Activated CD8-positive, alpha-beta memory T cell treated with anti-CD3 and anti-CD28 coated beads, Interleukin-2, amount 10 ng/mL, durations not matched to agents 7 days and 5 days (primary cell): ENCODE measurements at regions of chr5 and their contacts with region 1.

Region 1: DNA sequence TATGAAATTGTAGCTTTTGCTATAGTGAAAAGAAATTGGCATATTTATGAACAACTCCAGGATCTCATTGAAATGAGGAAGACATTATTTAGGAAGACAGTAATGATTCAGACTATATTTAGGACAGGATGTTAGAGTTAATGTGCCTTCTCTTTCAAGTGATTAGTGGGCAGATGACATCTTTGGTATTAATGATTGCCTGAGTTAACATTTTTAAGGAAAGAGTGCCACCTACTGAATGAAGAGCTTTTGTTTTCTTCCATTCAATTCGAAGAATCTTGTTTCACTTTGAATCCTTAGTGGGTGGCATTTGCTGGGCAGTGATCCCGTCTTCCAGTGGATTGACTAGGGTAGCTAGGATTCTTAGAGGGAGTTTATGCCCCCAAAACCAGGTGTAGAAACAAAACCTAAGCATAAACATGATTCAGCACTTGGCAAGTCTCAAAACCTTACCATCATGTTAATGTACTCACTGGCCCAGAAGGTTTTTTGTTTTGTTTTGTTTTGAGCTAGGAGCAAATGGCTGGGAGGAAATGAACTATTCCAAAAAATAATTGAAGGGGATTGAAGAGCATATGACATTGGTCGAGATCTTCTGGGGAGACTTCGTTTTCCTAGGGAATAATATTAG is 23.2 kb downstream of the MAP3K1 start:
- DNase-seq: no peak
- ATAC-seq: peak; percentile 45
- H3K4me3 Mint-ChIP-seq: peak overlapping the region; percentile 49
- H3K27ac Mint-ChIP-seq: peak overlapping the region; percentile 44
- H3K4me1 Mint-ChIP-seq: peaks cover 18% of the 10 kb centered on the region
- H3K27me3 Mint-ChIP-seq: no peaks in the 10 kb centered on the region

Region 2: GRCh38 chr5:56270568-56271392 is 567.7 kb before region 1 on chr5:
- CTCF ChIA-PET with region 1: interaction called, 50 read pairs
- DNase-seq: peak; percentile 79
- ATAC-seq: peak; percentile 99
- H3K4me3 Mint-ChIP-seq: no peak overlapping the region
- H3K27ac Mint-ChIP-seq: no peak overlapping the region
- H3K4me1 Mint-ChIP-seq: peaks cover 16% of the 10 kb centered on the region
- H3K27me3 Mint-ChIP-seq: peaks cover 19% of the 10 kb centered on the region

Region 3: GRCh38 chr5:56827049-56827448 is 11.5 kb before region 1 on chr5:
- CTCF ChIA-PET with region 1: interaction called, 12 read pairs
- DNase-seq: no peak
- ATAC-seq: peak; percentile 33
- H3K4me3 Mint-ChIP-seq: no peak overlapping the region
- H3K27ac Mint-ChIP-seq: peak overlapping the region; percentile 58
- H3K4me1 Mint-ChIP-seq: peaks cover 47% of the 10 kb centered on the region
- H3K27me3 Mint-ChIP-seq: no peaks in the 10 kb centered on the region

Region 4: GRCh38 chr5:56951946-56952691 is 113.6 kb after region 1 on chr5 and contains the start of gene MIER3:
- CTCF ChIA-PET with region 1: no interaction called
- DNase-seq: peak; percentile 85
- ATAC-seq: peak; percentile 95
- H3K4me3 Mint-ChIP-seq: peak within 1 kb of the TSS; percentile 93
- H3K27ac Mint-ChIP-seq: peak within 1 kb of the TSS; percentile 83
- H3K4me1 Mint-ChIP-seq: peaks cover 20% of the 10 kb centered on the region
- H3K27me3 Mint-ChIP-seq: peaks cover 38% of the 10 kb centered on the region
- total RNA-seq, gene MIER3: 23.9 to 24.8 TPM